ENCODE measurements at regions of chr11 and their contacts with region 1.

Region 1: GRCh38 chr11:56066980-56067379 is 26.1 kb upstream of the OR8I2 start:
- DNase-seq: no peak
- ATAC-seq: no peak
- H3K4me3 ChIP-seq: no peak overlapping the region
- H3K4me3 Mint-ChIP-seq: no peak overlapping the region
- H3K27ac ChIP-seq: no peak overlapping the region
- H3K27ac Mint-ChIP-seq: no peak overlapping the region
- H3K4me1 ChIP-seq: no peaks in the 10 kb centered on the region
- H3K4me1 Mint-ChIP-seq: no peaks in the 10 kb centered on the region
- H3K27me3 ChIP-seq: no peaks in the 10 kb centered on the region
- H3K27me3 Mint-ChIP-seq: no peaks in the 10 kb centered on the region
- CTCF ChIP-seq: no peak

Region 2: GRCh38 chr11:55994525-55994924 is 72.5 kb before region 1 on chr11 and contains the start of gene OR5F1:
- intact Hi-C with region 1: loop called (anchors 10 kb)
- DNase-seq: no peak
- ATAC-seq: no peak
- H3K4me3 ChIP-seq: no peak within 1 kb of the TSS
- H3K4me3 Mint-ChIP-seq: no peak within 1 kb of the TSS
- H3K27ac ChIP-seq: no peak within 1 kb of the TSS
- H3K27ac Mint-ChIP-seq: no peak within 1 kb of the TSS
- H3K4me1 ChIP-seq: no peaks in the 10 kb centered on the region
- H3K4me1 Mint-ChIP-seq: no peaks in the 10 kb centered on the region
- H3K27me3 ChIP-seq: no peaks in the 10 kb centered on the region
- H3K27me3 Mint-ChIP-seq: no peaks in the 10 kb centered on the region
- CTCF ChIP-seq: no peak
- total RNA-seq, gene OR5F1: not detected

Region 3: DNA sequence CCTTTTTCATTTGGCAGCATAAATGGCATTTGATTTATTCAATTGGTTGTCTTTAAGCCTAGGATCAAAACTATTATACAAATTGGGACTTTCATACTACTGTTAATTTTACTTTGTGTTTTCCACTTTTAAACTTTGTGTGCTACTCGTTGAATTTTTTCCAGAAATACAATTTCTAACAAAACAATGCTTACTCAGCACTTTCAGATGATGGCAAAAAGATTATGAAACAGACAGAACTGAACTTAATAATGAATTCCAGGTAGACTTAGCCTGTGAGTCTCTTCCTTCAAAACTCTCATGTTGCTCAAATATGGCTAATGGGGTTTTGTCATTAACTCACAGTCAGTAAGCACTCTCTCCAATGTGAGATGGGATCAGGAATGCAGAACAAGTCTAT is 140.8 kb after region 1 on chr11:
- intact Hi-C with region 1: no loop called
- DNase-seq: no peak
- ATAC-seq: no peak
- H3K4me3 ChIP-seq: no peak overlapping the region
- H3K4me3 Mint-ChIP-seq: no peak overlapping the region
- H3K27ac ChIP-seq: no peak overlapping the region
- H3K27ac Mint-ChIP-seq: no peak overlapping the region
- H3K4me1 ChIP-seq: no peaks in the 10 kb centered on the region
- H3K4me1 Mint-ChIP-seq: no peaks in the 10 kb centered on the region
- H3K27me3 ChIP-seq: no peaks in the 10 kb centered on the region
- H3K27me3 Mint-ChIP-seq: no peaks in the 10 kb centered on the region
- CTCF ChIP-seq: no peak

Measured in natural killer cell (primary cell).